ENCODE measurements at regions of chr2 and their contacts with region 1.

Region 1: GRCh38 chr2:219530048-219530963 is 13.3 kb downstream of the CHPF start:
- DNase-seq: peak; percentile 93
- ATAC-seq: peak; percentile 97
- H3K4me3 Mint-ChIP-seq: no peak overlapping the region
- H3K27ac Mint-ChIP-seq: no peak overlapping the region
- H3K4me1 Mint-ChIP-seq: no peaks in the 10 kb centered on the region
- H3K27me3 Mint-ChIP-seq: peaks cover 49% of the 10 kb centered on the region

Region 2: DNA sequence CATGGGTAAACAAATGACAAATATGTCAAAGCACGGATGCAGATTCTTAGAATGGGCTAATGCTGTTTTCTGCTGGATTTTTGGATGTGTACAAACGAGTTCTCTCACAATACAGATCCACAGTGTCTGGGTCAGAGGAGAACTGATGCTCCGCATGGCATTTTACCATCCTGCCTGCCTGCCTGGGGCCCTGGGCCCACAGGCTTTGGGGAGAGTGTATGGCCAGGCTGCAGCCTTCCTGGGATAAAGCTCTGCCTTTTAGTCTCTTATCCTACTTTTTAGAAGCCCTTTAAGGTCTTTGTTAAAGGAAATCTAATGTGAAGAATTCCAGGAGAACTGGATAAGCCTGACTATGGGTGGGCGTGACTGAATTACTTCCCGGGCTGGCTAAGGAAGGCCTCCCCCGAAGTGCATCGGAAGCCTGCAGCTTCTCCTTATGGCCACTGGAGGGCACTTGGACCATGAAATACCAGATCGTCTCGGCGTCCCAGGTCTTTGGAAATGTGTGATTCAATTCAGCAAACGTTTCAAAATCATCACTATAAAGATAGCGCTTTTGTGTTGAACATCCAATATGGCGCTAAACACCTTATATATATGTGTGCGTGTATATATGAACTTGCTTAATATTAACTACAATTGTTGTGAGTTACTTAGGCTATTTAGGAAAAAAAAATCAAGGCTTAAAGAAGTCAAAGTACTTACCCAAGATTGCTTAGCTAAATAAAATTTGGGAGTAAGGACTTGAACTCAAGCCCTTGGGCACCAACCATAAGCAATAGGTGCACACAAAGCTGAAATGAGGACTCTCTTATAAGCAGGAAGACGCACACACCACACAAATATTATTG is 127.4 kb before region 1 on chr2:
- CTCF ChIA-PET with region 1: interaction called, 102 read pairs
- POLR2A ChIA-PET with region 1: no interaction called
- intact Hi-C with region 1: loop called (anchors 1 kb)
- DNase-seq: peak; percentile 78
- ATAC-seq: peak; percentile 95
- H3K4me3 Mint-ChIP-seq: no peak overlapping the region
- H3K27ac Mint-ChIP-seq: no peak overlapping the region
- H3K4me1 Mint-ChIP-seq: peaks cover 1% of the 10 kb centered on the region
- H3K27me3 Mint-ChIP-seq: peaks cover 2% of the 10 kb centered on the region

Region 3: DNA sequence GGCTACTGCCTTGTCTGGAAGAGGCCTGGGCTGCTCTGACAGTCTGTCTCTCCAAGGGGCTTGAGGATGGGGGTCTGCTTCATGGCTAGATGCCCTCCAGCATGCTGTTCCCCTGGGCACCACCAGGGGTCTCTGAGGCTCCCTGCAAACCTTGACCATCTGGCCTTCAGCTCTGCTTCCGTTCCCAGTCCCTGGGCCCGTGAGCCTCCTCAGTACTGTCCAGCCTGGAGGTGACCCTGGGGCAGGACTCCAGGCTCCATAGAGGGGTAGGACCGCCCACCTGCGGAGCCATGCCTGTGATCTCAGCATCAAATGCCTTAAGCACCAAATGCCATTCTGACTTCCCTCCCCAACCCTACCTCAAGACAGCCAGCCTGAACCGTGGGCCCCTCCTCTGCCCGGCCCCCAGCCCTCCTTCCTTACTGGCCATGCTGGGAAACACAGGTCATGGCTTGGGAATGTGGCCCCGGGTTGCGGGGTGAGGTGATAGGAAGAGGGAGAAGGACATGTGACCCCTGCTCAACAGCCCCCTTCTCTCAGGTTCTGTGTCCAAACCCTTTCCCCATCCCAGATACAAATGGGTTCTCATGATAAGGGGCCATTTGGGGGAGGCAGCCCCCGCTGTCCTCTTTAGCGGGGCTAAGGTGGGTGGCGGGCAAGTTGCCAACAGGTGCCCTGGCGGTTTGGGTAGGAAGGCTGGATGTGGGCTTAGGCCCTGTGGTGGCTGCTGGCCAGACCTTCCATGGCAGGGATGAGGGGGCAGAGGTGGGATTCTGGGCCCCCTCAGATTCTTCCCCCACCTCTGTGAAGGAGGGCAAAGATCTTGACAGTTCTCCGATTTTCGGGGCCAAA is 70.6 kb before region 1 on chr2:
- CTCF ChIA-PET with region 1: interaction called, 18 read pairs
- POLR2A ChIA-PET with region 1: no interaction called
- intact Hi-C with region 1: loop called (anchors 1 to 5 kb)
- DNase-seq: peak; percentile 64
- ATAC-seq: peak; percentile 46
- H3K4me3 Mint-ChIP-seq: no peak overlapping the region
- H3K27ac Mint-ChIP-seq: no peak overlapping the region
- H3K4me1 Mint-ChIP-seq: peaks cover 4% of the 10 kb centered on the region
- H3K27me3 Mint-ChIP-seq: no peaks in the 10 kb centered on the region

Region 4: GRCh38 chr2:219475697-219476651 is 54.3 kb before region 1 on chr2:
- CTCF ChIA-PET with region 1: interaction called, 29 read pairs
- POLR2A ChIA-PET with region 1: no interaction called
- intact Hi-C with region 1: loop called (anchors 1 kb)
- DNase-seq: peak; percentile 86
- ATAC-seq: peak; percentile 94
- H3K4me3 Mint-ChIP-seq: no peak overlapping the region
- H3K27ac Mint-ChIP-seq: no peak overlapping the region
- H3K4me1 Mint-ChIP-seq: peaks cover 4% of the 10 kb centered on the region
- H3K27me3 Mint-ChIP-seq: no peaks in the 10 kb centered on the region

Region 5: DNA sequence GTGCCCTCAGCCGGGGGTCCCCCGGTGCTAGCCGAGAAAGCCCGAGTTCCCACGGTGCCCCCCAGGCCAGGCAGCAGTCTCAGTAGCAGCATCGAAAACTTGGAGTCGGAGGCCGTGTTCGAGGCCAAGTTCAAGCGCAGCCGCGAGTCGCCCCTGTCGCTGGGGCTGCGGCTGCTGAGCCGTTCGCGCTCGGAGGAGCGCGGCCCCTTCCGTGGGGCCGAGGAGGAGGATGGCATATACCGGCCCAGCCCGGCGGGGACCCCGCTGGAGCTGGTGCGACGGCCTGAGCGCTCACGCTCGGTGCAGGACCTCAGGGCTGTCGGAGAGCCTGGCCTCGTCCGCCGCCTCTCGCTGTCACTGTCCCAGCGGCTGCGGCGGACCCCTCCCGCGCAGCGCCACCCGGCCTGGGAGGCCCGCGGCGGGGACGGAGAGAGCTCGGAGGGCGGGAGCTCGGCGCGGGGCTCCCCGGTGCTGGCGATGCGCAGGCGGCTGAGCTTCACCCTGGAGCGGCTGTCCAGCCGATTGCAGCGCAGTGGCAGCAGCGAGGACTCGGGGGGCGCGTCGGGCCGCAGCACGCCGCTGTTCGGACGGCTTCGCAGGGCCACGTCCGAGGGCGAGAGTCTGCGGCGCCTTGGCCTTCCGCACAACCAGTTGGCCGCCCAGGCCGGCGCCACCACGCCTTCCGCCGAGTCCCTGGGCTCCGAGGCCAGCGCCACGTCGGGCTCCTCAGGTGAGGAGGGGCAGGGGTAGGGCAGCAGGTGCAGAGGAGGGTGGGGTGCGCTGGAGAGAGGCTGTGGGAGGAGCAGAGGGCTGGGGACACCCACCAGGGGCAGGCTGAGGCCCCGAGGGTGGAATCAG is 45.7 kb before region 1 on chr2:
- CTCF ChIA-PET with region 1: interaction called, 29 read pairs
- POLR2A ChIA-PET with region 1: no interaction called
- intact Hi-C with region 1: no loop called
- DNase-seq: peak; percentile 27
- ATAC-seq: peak; percentile 51
- H3K4me3 Mint-ChIP-seq: peak overlapping the region; percentile 15
- H3K27ac Mint-ChIP-seq: no peak overlapping the region
- H3K4me1 Mint-ChIP-seq: peaks cover 6% of the 10 kb centered on the region
- H3K27me3 Mint-ChIP-seq: peaks cover 27% of the 10 kb centered on the region

Region 6: DNA sequence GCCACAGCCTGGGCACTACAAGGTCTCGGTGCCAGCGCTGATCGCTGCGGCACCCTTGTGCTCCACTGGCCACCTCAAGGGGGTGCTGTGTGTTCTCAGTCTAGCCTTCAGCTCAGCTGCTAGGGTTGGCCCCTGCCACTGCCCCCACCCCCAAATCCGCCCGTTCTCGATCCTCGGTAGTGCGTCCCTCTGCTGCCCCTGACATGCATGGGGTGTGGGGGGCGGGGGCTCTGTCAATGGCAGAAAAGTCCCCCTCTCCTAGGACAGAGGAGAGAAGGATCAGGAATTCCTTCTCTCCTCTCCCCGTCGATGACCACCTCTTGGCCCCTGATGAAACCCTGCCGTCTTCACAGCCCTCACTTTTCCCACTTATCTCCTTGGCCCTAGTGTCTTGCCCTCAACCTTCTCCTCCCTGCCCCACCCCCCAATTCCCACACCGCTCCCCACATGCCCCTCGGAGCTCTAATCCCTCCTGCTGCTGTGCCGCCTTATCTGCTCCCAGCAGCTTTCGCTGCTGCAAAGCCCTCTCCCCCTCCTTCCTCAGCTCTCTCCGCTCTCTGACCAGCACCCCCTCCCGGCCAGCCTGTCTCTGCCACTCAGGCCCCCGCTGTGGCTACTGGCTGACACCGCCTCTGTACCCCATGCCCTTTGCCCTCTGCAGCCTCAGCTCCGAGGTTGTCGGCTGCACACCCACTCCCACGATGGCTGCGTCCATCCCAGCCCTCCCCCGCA is 20.4 kb before region 1 on chr2:
- CTCF ChIA-PET with region 1: interaction called, 55 read pairs
- POLR2A ChIA-PET with region 1: interaction called, 4 read pairs
- intact Hi-C with region 1: no loop called
- DNase-seq: peak; percentile 77
- ATAC-seq: peak; percentile 91
- H3K4me3 Mint-ChIP-seq: no peak overlapping the region
- H3K27ac Mint-ChIP-seq: no peak overlapping the region
- H3K4me1 Mint-ChIP-seq: peaks cover 20% of the 10 kb centered on the region
- H3K27me3 Mint-ChIP-seq: peaks cover 44% of the 10 kb centered on the region

Region 7: DNA sequence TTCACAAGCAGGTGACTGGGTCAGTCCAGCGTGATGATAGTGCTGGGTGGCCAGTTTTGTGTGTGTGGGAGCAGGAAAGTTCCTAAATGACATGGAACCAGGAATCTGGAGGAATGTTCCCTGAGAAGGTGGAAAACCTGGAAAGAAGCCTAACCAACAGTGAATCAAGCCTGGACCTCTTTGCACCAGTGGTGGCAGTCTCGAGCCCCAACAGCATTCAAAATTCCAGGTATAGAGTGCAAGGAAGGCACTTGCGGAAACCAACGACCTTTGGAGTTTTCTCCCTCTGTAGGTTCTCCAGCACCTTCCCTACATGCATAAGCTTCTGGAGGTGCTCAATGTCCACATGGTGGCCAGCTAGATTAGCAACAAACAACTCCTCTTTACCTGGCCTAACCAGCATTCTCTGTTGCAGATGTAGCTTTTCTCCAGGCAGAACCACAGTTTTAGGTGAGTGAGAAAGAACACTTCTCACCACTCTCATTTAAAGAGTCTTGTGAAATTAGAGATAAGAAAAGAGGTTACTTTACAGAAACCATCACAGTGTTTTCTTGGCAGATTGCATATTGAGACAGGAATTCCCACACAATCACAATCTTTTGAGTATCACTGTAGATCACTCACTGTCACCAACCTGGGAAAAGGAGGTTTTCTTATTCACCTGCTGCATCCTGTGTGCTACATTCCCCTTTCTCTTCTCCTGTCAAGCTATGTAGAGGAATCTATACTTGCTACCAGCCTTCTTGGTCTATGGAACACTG is 671.6 kb after region 1 on chr2:
- CTCF ChIA-PET with region 1: no interaction called
- POLR2A ChIA-PET with region 1: no interaction called
- intact Hi-C with region 1: no loop called
- DNase-seq: no peak
- ATAC-seq: no peak
- H3K4me3 Mint-ChIP-seq: no peak overlapping the region
- H3K27ac Mint-ChIP-seq: no peak overlapping the region
- H3K4me1 Mint-ChIP-seq: no peaks in the 10 kb centered on the region
- H3K27me3 Mint-ChIP-seq: peaks cover 2% of the 10 kb centered on the region

Measured in activated CD4-positive, alpha-beta T cell treated with anti-CD3 and anti-CD28 coated beads for 36 hours (primary cell).